ENCODE measurements at regions of chr20 and their contacts with region 1.

Region 1: GRCh38 chr20:50929299-50930138 is 1.7 kb downstream of the ADNP start:
- DNase-seq: peak; percentile 95
- ATAC-seq: peak; percentile 55
- H3K4me3 ChIP-seq: peak overlapping the region; percentile 62 to 85 (median 76)
- H3K4me3 Mint-ChIP-seq: peak overlapping the region; percentile 92
- H3K27ac ChIP-seq: peak overlapping the region; percentile 62 to 68
- H3K27ac Mint-ChIP-seq: peak overlapping the region; percentile 91
- H3K4me1 ChIP-seq: peaks cover 24 to 28% of the 10 kb centered on the region in 2 donors
- H3K4me1 Mint-ChIP-seq: peaks cover 53% of the 10 kb centered on the region
- H3K27me3 ChIP-seq: no peaks in the 10 kb centered on the region
- H3K27me3 Mint-ChIP-seq: no peaks in the 10 kb centered on the region
- CTCF ChIP-seq: peak; percentile 95

Region 2: DNA sequence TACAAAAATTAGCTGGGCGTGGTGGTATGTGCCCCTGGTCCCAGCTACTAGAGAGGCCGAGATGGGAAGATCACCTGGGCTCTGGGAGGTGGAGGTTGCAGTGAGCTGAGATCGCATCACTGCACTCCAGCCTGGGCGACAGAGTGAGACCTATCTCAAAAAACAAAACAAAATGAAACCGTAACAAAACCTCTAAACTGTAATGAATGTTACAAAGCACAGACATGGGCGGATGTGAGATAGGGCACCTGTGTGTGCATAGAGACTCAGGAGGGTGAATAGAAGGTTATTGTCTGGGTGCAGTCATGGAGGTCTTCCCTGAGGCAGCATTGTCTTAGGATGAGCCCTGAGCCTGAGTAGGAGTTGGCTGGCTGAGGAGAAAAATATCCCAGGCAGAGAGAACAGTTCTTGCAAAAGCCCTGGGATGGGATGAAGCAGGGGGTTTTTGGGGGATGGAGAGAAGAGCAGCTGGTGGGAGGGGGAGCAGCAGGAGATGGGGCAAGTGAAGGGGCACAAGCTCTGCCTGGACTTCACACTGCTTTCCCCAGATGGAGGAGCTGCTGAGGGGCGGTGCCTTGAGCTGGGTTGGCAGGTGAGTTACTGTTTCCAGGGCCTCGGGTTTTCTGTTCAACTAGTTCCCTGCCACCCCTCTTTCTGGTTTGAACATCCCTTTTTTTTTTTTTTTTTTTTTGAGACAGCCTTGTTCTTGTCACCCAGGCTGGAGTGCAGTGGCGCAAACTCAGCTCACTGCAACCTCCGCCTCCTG is 129.4 kb before region 1 on chr20:
- CTCF ChIA-PET with region 1: interaction called, 390 read pairs
- POLR2A ChIA-PET with region 1: interaction called, 123 read pairs
- intact Hi-C with region 1: no loop called
- DNase-seq: peak; percentile 62
- ATAC-seq: peak; percentile 52
- H3K4me3 ChIP-seq: peak overlapping the region in 3 of 5 experiments; percentile 8 to 21 (median 15)
- H3K4me3 Mint-ChIP-seq: peak overlapping the region; percentile 83
- H3K27ac ChIP-seq: peak overlapping the region; percentile 77 to 83
- H3K27ac Mint-ChIP-seq: peak overlapping the region; percentile 98
- H3K4me1 ChIP-seq: peaks cover 51 to 68% of the 10 kb centered on the region in 2 donors
- H3K4me1 Mint-ChIP-seq: peaks cover 64% of the 10 kb centered on the region
- H3K27me3 ChIP-seq: no peaks in the 10 kb centered on the region
- H3K27me3 Mint-ChIP-seq: no peaks in the 10 kb centered on the region
- CTCF ChIP-seq: no peak

Region 3: GRCh38 chr20:50815162-50815989 is 114.1 kb before region 1 on chr20:
- CTCF ChIA-PET with region 1: interaction called, 33 read pairs
- POLR2A ChIA-PET with region 1: interaction called, 18 read pairs
- intact Hi-C with region 1: loop called (anchors 1 kb)
- DNase-seq: peak; percentile 63
- ATAC-seq: peak; percentile 72
- H3K4me3 ChIP-seq: peak overlapping the region in 4 of 5 experiments; percentile 19 to 46 (median 38)
- H3K4me3 Mint-ChIP-seq: peak overlapping the region; percentile 88
- H3K27ac ChIP-seq: peak overlapping the region; percentile 57 to 77
- H3K27ac Mint-ChIP-seq: peak overlapping the region; percentile 97
- H3K4me1 ChIP-seq: peaks cover 87 to 98% of the 10 kb centered on the region in 2 donors
- H3K4me1 Mint-ChIP-seq: peaks cover 86% of the 10 kb centered on the region
- H3K27me3 ChIP-seq: no peaks in the 10 kb centered on the region
- H3K27me3 Mint-ChIP-seq: no peaks in the 10 kb centered on the region
- CTCF ChIP-seq: no peak

Region 4: DNA sequence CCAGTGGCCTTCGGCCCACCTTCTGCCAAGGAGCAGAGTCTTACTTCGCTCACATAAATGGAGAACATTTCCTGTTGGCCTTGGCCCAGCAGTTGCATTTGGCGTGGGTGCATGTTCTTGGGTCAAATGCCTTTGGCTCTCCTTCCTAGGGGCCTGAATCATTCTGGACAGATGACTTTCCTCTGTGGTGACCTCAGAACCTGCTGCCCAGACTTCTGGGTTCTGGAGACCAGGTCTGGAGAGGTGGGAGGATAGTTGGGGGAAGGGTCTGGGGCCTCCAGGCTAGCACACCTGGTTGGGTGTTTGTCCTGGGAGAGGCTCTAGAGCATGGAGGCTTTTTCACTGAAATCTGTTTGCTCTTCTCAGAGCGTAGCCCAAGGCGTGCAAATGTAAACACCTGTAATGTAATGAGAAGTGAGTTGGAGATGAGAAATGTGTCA is 105.3 kb before region 1 on chr20:
- CTCF ChIA-PET with region 1: interaction called, 33 read pairs
- POLR2A ChIA-PET with region 1: interaction called, 10 read pairs
- intact Hi-C with region 1: no loop called
- DNase-seq: no peak
- ATAC-seq: no peak
- H3K4me3 ChIP-seq: no peak overlapping the region
- H3K4me3 Mint-ChIP-seq: no peak overlapping the region
- H3K27ac ChIP-seq: no peak overlapping the region
- H3K27ac Mint-ChIP-seq: peak overlapping the region; percentile 50
- H3K4me1 ChIP-seq: peaks cover 37 to 38% of the 10 kb centered on the region in 2 donors
- H3K4me1 Mint-ChIP-seq: peaks cover 51% of the 10 kb centered on the region
- H3K27me3 ChIP-seq: no peaks in the 10 kb centered on the region
- H3K27me3 Mint-ChIP-seq: no peaks in the 10 kb centered on the region
- CTCF ChIP-seq: no peak

Region 5: DNA sequence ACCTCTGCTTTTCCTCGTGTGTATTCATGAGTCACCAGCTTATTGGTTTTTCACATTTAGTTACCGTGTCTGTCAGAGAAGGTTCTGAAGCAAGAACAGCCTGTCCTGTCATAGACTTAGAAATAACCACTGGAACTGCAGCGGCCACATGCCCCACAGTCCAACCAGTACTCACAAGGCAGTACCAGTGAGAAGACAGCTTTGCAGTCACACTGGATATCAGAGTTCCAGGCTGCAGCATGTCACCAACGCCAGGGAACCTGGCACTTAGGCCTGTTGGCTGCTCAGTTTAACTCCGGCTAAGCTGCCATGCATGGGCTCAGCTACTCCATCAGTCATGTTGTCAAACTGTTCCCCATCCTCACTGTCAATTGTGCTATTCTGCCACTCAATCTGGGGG is 38.4 kb before region 1 on chr20:
- CTCF ChIA-PET with region 1: interaction called, 3 read pairs
- POLR2A ChIA-PET with region 1: interaction called, 5 read pairs
- intact Hi-C with region 1: loop called (anchors 5 kb)
- DNase-seq: no peak
- ATAC-seq: no peak
- H3K4me3 ChIP-seq: no peak overlapping the region
- H3K4me3 Mint-ChIP-seq: no peak overlapping the region
- H3K27ac ChIP-seq: no peak overlapping the region
- H3K27ac Mint-ChIP-seq: peak overlapping the region; percentile 51
- H3K4me1 ChIP-seq: no peaks in the 10 kb centered on the region
- H3K4me1 Mint-ChIP-seq: peaks cover 5% of the 10 kb centered on the region
- H3K27me3 ChIP-seq: no peaks in the 10 kb centered on the region
- H3K27me3 Mint-ChIP-seq: no peaks in the 10 kb centered on the region
- CTCF ChIP-seq: no peak

Region 6: DNA sequence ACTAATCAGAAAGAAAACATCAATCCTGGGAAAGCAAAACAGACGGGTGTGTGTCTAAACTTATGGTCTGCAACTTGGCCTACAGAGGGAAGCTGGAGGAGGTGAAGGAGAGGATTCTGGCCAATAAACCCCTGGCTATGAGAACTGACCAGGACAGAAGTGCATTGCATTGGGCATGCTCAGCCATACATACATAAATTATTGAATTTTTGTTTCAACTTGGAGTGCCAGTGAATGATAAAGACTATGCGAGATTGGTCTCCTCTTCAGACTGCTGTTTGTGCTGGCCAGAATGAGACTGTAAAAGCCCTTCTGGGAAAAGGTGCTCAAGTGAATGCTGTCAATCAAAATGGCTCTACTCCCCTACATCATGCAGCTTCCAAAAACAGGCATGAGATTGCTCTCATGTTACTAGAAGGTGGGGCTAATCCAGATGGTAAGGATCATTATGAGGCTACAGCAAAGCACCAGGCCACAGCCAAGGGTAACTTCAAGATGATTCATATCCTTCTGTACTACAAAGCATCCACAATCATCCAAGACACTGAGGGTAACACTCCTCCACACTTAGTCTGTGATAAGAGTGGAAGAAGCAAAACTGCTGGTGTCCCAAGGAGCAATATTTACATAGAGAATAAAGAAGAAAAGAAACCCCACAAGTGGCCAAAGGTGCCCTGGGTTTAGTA is 15.7 kb before region 1 on chr20:
- CTCF ChIA-PET with region 1: interaction called, 15 read pairs
- POLR2A ChIA-PET with region 1: interaction called, 7 read pairs
- intact Hi-C with region 1: loop called (anchors 2 kb)
- DNase-seq: no peak
- ATAC-seq: no peak
- H3K4me3 ChIP-seq: no peak overlapping the region
- H3K4me3 Mint-ChIP-seq: peak overlapping the region; percentile 2
- H3K27ac ChIP-seq: no peak overlapping the region
- H3K27ac Mint-ChIP-seq: peak overlapping the region; percentile 2
- H3K4me1 ChIP-seq: peaks cover 36 to 42% of the 10 kb centered on the region in 2 donors
- H3K4me1 Mint-ChIP-seq: peaks cover 81% of the 10 kb centered on the region
- H3K27me3 ChIP-seq: no peaks in the 10 kb centered on the region
- H3K27me3 Mint-ChIP-seq: no peaks in the 10 kb centered on the region
- CTCF ChIP-seq: no peak

Region 7: DNA sequence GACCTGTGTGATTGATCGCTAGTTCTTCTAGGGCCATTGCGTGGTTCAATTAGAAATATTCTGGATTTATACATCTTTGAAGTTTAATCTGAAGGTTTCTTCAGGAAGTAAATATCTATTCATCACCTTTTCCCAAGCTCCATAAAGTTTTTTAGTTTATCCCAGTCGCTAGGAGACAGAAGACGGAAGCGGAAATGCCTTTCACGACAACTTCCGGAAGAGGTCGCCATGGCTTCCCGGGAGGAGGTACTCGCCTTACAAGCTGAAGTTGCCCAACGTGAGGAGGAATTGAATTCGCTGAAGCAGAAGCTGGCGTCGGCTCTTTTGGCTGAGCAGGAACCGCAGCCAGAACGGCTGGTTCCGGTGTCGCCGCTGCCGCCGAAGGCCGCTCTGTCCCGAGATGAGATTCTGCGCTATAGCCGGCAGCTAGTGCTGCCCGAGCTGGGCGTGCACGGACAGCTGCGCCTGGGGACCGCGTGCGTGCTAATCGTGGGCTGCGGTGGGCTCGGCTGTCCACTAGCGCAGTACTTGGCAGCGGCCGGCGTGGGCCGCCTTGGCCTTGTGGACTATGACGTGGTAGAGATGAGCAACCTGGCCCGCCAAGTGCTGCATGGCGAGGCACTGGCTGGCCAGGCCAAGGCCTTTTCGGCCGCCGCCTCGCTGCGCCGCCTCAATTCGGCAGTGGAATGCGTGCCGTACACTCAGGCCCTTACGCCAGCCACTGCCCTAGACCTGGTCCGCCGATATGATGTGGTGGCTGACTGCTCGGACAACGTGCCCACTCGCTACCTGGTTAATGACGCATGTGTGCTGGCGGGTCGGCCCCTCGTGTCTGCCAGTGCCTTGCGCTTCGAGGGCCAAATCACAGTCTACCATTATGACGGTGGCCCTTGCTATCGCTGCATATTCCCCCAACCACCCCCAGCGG is 29.4 kb after region 1 on chr20 and contains the start of gene MOCS3:
- CTCF ChIA-PET with region 1: interaction called, 31 read pairs
- POLR2A ChIA-PET with region 1: interaction called, 30 read pairs
- intact Hi-C with region 1: loop called (anchors 1 kb)
- DNase-seq: peak; percentile 95
- ATAC-seq: peak; percentile 80
- H3K4me3 ChIP-seq: peak within 1 kb of the TSS; percentile 78 to 99 (median 86)
- H3K4me3 Mint-ChIP-seq: peak within 1 kb of the TSS; percentile 98
- H3K27ac ChIP-seq: peak within 1 kb of the TSS; percentile 81 to 99
- H3K27ac Mint-ChIP-seq: peak within 1 kb of the TSS; percentile 99
- H3K4me1 ChIP-seq: peaks cover 24 to 26% of the 10 kb centered on the region in 2 donors
- H3K4me1 Mint-ChIP-seq: peaks cover 40% of the 10 kb centered on the region
- H3K27me3 ChIP-seq: no peaks in the 10 kb centered on the region
- H3K27me3 Mint-ChIP-seq: no peaks in the 10 kb centered on the region
- CTCF ChIP-seq: no peak
- total RNA-seq, gene MOCS3: 7.6 and 7.9 TPM in 2 replicates

Region 8: DNA sequence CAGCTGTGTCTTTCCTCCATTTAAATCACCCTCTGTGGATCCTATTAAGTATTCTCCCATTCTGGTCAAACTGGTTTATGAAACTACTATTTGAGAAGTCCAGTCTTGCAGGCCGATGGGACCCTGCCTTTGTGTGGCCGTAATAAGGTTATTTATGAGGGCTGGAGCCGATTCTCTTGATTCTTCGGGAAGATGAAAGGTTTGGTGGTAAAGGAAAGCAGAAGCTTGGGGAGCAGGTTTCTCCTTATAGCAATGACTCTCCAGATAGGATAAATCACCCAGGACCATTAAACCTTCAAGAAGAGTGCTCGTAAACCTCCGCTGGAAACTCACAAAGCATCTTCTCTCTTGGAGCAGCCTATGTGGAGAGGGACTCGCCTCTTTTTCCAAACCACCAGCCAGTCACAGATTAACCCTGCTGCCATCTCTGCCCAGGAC is 942.4 kb after region 1 on chr20:
- CTCF ChIA-PET with region 1: no interaction called
- POLR2A ChIA-PET with region 1: no interaction called
- intact Hi-C with region 1: no loop called
- DNase-seq: no peak
- ATAC-seq: no peak
- H3K4me3 ChIP-seq: no peak overlapping the region
- H3K4me3 Mint-ChIP-seq: no peak overlapping the region
- H3K27ac ChIP-seq: no peak overlapping the region
- H3K27ac Mint-ChIP-seq: no peak overlapping the region
- H3K4me1 ChIP-seq: no peaks in the 10 kb centered on the region
- H3K4me1 Mint-ChIP-seq: no peaks in the 10 kb centered on the region
- H3K27me3 ChIP-seq: no peaks in the 10 kb centered on the region
- H3K27me3 Mint-ChIP-seq: peaks cover under 1% of the 10 kb centered on the region
- CTCF ChIP-seq: no peak

Measured in B cell (primary cell).